Heart right ventricle (tissue), 16 donors: ENCODE measurements at regions of chr1 and their contacts with region 1.

Region 1: GRCh38 chr1:224411766-224412165 is 22.8 kb downstream of the WDR26 start:
- DNase-seq: no peak
- ATAC-seq: no peak
- H3K4me3 ChIP-seq: no peak overlapping the region
- H3K27ac ChIP-seq: no peak overlapping the region
- H3K4me1 ChIP-seq: peaks cover 0 to 6% (median 0%) of the 10 kb centered on the region in 9 donors
- H3K27me3 ChIP-seq: no peaks in the 10 kb centered on the region
- CTCF ChIP-seq: no peak

Region 2: DNA sequence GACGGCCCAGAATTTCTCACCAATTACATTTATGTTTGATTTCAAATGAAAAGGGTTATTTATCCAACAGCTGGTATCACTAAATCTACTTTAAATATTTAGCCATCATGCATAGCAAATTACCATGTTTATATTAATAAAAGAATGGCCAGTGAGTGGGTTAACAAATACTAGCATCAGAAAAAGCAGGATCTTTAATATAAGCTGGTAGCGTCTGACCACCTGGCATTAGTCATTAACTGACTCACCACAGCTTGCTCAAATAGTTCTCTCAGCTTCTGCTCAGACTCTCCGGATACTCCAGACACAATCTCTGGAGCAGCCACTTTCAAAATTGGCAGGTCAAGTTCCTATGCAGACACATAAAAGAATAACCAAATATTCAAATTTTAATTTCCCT is 111.5 kb before region 1 on chr1:
- intact Hi-C with region 1: loop called in 2 of 10 experiments (anchors 10 kb)
- DNase-seq: no peak
- ATAC-seq: no peak
- H3K4me3 ChIP-seq: no peak overlapping the region
- H3K27ac ChIP-seq: no peak overlapping the region
- H3K4me1 ChIP-seq: no peaks in the 10 kb centered on the region
- H3K27me3 ChIP-seq: no peaks in the 10 kb centered on the region
- CTCF ChIP-seq: no peak

Region 3: GRCh38 chr1:224377676-224378006 is 34.1 kb before region 1 on chr1:
- intact Hi-C with region 1: no loop called
- DNase-seq: no peak
- ATAC-seq: peak in 6 of 8 donors; percentile 72 to 89 (median 76)
- H3K4me3 ChIP-seq: no peak overlapping the region
- H3K27ac ChIP-seq: peak overlapping the region in 9 of 10 donors; percentile 39 to 77 (median 59)
- H3K4me1 ChIP-seq: peaks cover 0 to 75% (median 10%) of the 10 kb centered on the region in 9 donors
- H3K27me3 ChIP-seq: no peaks in the 10 kb centered on the region
- CTCF ChIP-seq: no peak